ENCODE measurements at regions of chr3 and their contacts with region 1.

Region 1: GRCh38 chr3:126083913-126084767 is at the start of gene SLC41A3:
- DNase-seq: peak; percentile 91 to 94
- H3K4me3 ChIP-seq: peak within 1 kb of the TSS; percentile 73
- H3K4me3 Mint-ChIP-seq: peak within 1 kb of the TSS; percentile 81
- H3K27ac Mint-ChIP-seq: peak within 1 kb of the TSS; percentile 85
- H3K4me1 ChIP-seq: peaks cover 7% of the 10 kb centered on the region; the same call in 1 of the 2 replicates
- H3K4me1 Mint-ChIP-seq: peaks cover 15% of the 10 kb centered on the region
- H3K27me3 ChIP-seq: no peaks in the 10 kb centered on the region
- H3K27me3 Mint-ChIP-seq: no peaks in the 10 kb centered on the region
- CTCF ChIP-seq: peak; percentile 26 to 53
- total RNA-seq, gene SLC41A3: 38.0 and 41.3 TPM in 2 replicates

Region 2: DNA sequence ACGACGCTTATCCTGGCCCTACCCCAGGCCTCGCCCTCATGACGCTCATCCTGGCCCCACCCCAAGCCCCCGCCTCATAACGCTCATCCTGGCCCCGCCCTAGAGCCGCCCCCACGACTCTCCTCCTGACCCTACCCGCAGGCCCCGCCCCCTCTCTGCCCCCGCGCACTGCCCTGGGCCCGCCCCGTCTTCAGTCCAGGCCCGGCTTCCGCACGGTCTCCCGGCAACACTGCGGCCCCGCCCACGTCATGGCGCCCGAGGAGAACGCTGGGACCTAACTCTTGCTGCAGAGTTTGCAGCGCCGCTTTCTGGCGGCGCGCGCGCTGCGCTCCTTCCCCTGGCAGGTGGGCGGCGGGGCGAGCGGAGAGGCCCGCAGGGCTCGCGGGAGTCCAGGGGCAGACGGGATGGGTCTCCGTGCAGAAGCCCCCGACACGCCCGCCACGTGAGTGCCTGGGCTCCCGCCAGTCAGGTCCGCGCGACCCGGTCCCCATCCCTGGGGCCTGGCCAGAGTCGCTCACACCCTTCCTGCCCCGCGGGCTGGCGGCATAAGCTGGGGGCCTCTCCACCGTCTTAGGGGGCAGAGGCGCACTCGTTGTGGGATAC is 167.7 kb before region 1 on chr3:
- CTCF ChIA-PET with region 1: no interaction called
- POLR2A ChIA-PET with region 1: no interaction called
- intact Hi-C with region 1: loop called (anchors 10 kb)
- DNase-seq: peak in 1 of 2 experiments; percentile 97
- H3K4me3 ChIP-seq: peak overlapping the region; percentile 82
- H3K4me3 Mint-ChIP-seq: peak overlapping the region; percentile 69
- H3K27ac Mint-ChIP-seq: peak overlapping the region; percentile 73
- H3K4me1 ChIP-seq: no peaks in the 10 kb centered on the region
- H3K4me1 Mint-ChIP-seq: no peaks in the 10 kb centered on the region
- H3K27me3 ChIP-seq: no peaks in the 10 kb centered on the region
- H3K27me3 Mint-ChIP-seq: no peaks in the 10 kb centered on the region
- CTCF ChIP-seq: peak in 1 of 2 experiments; percentile 30

Region 3: GRCh38 chr3:125990253-125990970 is 93.7 kb before region 1 on chr3:
- CTCF ChIA-PET with region 1: no interaction called
- POLR2A ChIA-PET with region 1: no interaction called
- intact Hi-C with region 1: loop called (anchors 1 kb)
- DNase-seq: peak; percentile 86 to 93
- H3K4me3 ChIP-seq: peak overlapping the region; percentile 66
- H3K4me3 Mint-ChIP-seq: peak overlapping the region; percentile 97
- H3K27ac Mint-ChIP-seq: peak overlapping the region; percentile 92
- H3K4me1 ChIP-seq: no peaks in the 10 kb centered on the region
- H3K4me1 Mint-ChIP-seq: no peaks in the 10 kb centered on the region
- H3K27me3 ChIP-seq: no peaks in the 10 kb centered on the region
- H3K27me3 Mint-ChIP-seq: peaks cover 11% of the 10 kb centered on the region
- CTCF ChIP-seq: no peak

Region 4: GRCh38 chr3:126398423-126399350 is 314.5 kb after region 1 on chr3:
- CTCF ChIA-PET with region 1: no interaction called
- POLR2A ChIA-PET with region 1: interaction called, 17 read pairs
- intact Hi-C with region 1: no loop called
- DNase-seq: no peak
- H3K4me3 ChIP-seq: no peak overlapping the region
- H3K4me3 Mint-ChIP-seq: no peak overlapping the region
- H3K27ac Mint-ChIP-seq: no peak overlapping the region
- H3K4me1 ChIP-seq: no peaks in the 10 kb centered on the region
- H3K4me1 Mint-ChIP-seq: no peaks in the 10 kb centered on the region
- H3K27me3 ChIP-seq: no peaks in the 10 kb centered on the region; the same call in 1 of the 2 replicates
- H3K27me3 Mint-ChIP-seq: peaks cover 11% of the 10 kb centered on the region
- CTCF ChIP-seq: no peak